Activated CD4-positive, alpha-beta T cell treated with anti-CD3 and anti-CD28 coated beads, Interleukin-2, amount 10 ng/mL, durations not matched to agents 7 days and 5 days (primary cell): ENCODE measurements at regions of chr2 and their contacts with region 1.

Region 1: DNA sequence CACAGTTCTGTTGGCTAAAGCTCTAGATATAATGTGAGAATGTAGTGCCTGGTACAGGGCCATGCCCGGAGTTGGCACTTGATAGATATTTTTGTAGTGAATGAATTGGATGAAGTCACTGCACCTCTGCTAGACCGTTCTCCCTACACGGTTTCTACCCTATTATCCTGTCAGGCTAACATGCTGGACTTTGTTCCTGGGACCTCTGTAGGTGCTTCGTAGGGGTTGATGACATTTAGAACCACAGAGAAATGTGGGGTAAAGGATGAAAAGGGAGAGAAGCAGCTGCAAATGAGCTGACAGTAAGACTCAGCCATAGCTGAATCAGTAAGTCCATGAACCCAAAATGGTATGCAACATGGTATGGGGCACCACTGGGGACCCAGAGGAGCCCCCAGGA is 4.1 kb upstream of the FBLN7 start:
- DNase-seq: no peak
- H3K4me3 Mint-ChIP-seq: no peak overlapping the region
- H3K27ac Mint-ChIP-seq: no peak overlapping the region
- H3K4me1 Mint-ChIP-seq: peaks cover 15% of the 10 kb centered on the region
- H3K27me3 Mint-ChIP-seq: peaks cover 17% of the 10 kb centered on the region

Region 2: DNA sequence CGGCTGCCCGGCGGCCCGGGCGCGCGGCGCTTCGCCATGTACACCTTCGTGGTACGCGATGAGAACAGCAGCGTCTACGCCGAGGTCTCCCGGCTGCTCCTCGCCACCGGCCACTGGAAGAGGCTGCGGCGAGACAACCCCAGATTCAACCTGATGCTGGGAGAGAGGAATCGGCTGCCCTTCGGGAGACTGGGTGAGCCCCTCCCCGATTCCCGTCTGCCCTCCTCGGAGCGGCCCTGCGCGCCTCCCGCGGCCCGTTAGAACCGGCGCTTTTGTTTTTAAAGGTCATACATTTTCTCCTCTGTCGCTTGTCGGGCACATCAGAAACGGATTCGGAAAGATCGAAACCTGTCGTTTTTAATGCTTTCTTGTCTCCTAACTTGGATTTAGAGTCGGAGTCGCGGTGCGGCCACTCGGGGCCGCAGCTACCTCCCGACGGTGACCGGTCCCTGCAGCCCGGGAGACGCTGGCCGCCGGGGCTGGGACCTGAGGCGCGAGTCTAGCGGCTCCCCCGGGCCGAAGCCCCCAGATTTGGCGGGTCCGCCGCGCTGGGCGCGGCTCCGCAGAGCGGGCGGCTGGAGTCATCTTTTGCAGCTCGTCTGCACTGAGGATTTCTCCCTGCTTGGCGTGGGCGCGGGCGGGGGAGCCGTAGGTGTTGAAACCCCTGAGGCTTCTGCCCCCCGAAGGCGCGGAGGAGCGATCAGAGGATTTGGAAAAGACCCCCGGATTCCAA is 348.4 kb after region 1 on chr2:
- CTCF ChIA-PET with region 1: no interaction called
- POLR2A ChIA-PET with region 1: interaction called, 11 read pairs
- DNase-seq: peak; percentile 30
- H3K4me3 Mint-ChIP-seq: peak overlapping the region; percentile 93
- H3K27ac Mint-ChIP-seq: peak overlapping the region; percentile 88
- H3K4me1 Mint-ChIP-seq: peaks cover 34% of the 10 kb centered on the region
- H3K27me3 Mint-ChIP-seq: no peaks in the 10 kb centered on the region